Naive thymus-derived CD4-positive, alpha-beta T cell (primary cell): ENCODE measurements at regions of chr20 and their contacts with region 1.

Region 1: DNA sequence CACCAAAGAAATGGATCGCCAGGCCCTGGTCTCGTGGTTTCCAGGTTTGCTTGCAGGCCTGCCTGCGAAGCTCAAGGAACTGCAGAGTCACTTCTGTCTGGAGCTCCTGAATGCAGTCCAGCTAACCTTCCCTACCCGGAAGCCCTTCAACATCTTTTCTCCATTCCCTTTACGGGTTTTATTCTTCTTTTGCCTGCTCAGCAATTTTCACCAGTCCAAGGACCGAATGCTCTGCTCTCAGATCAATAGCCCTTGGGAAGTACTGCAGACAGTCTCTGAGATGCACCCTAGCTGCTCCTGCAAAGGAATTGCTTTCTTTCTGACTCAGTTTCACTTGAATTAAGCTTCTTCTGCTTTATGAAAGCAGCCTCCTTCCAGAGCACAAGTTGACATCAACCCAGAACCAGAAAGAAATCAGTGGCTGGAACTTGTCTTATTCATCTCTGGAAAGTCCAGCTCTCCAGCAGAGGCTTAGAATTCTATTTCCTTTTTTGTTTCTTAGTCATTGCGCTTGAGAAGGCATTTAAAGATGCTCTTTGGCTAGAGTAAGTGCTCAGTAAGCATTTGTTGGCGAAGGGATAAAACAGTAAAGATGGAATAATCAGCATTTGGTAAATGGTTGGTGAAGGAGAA is 18.7 kb upstream of the YWHAB start:
- DNase-seq: no peak
- ATAC-seq: no peak
- H3K4me3 ChIP-seq: no peak overlapping the region
- H3K4me3 Mint-ChIP-seq: peak overlapping the region in 9 of 10 donors; percentile 41 to 81 (median 70)
- H3K27ac ChIP-seq: no peak overlapping the region
- H3K27ac Mint-ChIP-seq: peak overlapping the region in 2 of 9 donors; percentile 33 to 43
- H3K4me1 ChIP-seq: no peaks in the 10 kb centered on the region
- H3K4me1 Mint-ChIP-seq: peaks cover 0 to 15% (median 8%) of the 10 kb centered on the region in 7 donors
- H3K27me3 ChIP-seq: no peaks in the 10 kb centered on the region
- H3K27me3 Mint-ChIP-seq: peaks cover 0 to 28% (median 0%) of the 10 kb centered on the region in 5 donors

Region 2: DNA sequence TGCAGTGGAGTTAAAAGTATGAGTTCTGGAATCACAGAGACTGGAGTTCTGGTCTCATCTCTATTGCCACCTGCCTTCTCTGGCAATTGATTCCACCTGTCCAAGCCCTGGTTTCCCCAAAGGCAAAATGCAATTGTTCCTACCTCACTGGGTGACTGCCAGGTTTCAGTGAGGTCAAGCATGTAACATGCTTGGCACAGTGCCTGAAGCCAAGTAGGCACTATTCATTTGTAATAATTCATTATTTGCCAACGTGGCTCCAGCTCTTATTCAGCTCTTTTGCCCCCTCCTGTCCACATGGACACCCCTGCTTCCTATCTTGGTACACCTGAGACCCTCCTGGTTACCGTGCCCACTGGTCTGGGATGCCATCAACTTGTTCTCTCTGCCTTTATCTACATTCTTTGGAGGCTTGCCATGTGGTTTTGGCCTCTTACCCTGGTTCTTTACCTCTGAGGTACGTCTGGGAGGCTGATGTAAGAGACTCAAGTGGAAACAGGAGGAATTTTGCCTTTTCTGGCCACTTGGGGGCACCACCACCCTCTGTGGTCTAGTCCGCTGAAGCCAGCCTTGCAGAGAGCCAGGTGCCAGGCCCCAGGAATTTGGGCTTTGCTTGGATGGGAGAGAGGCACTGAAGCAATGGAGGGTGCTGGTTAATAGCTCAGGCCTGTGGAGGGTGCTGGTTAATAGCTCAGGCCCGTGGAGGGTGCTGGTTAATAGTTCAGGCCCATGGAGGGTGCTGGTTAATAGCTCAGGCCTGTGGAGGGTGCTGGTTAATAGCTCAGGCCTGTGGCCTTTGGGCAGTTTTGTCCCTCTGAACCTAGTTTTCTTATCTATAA is 119.4 kb before region 1 on chr20:
- CTCF ChIA-PET with region 1: interaction called, 3 read pairs
- POLR2A ChIA-PET with region 1: no interaction called
- intact Hi-C with region 1: loop called (anchors 1 kb)
- DNase-seq: peak in 8 of 9 donors; percentile 28 to 53 (median 42)
- ATAC-seq: peak; percentile 59
- H3K4me3 ChIP-seq: no peak overlapping the region
- H3K4me3 Mint-ChIP-seq: peak overlapping the region; percentile 28 to 83 (median 69)
- H3K27ac ChIP-seq: no peak overlapping the region
- H3K27ac Mint-ChIP-seq: peak overlapping the region in 3 of 9 donors; percentile 9 to 80 (median 29)
- H3K4me1 ChIP-seq: peaks cover 0 to 6% of the 10 kb centered on the region in 2 donors
- H3K4me1 Mint-ChIP-seq: peaks cover 9 to 18% (median 16%) of the 10 kb centered on the region in 7 donors
- H3K27me3 ChIP-seq: peaks cover 0 to 4% of the 10 kb centered on the region in 2 donors
- H3K27me3 Mint-ChIP-seq: peaks cover 10 to 41% (median 31%) of the 10 kb centered on the region in 5 donors

Region 3: GRCh38 chr20:44800398-44801046 is 66.3 kb before region 1 on chr20:
- CTCF ChIA-PET with region 1: no interaction called
- POLR2A ChIA-PET with region 1: no interaction called
- intact Hi-C with region 1: loop called in 1 of 2 experiments (anchors 2 kb)
- DNase-seq: peak in 1 of 9 donors; percentile 2
- ATAC-seq: no peak
- H3K4me3 ChIP-seq: no peak overlapping the region
- H3K4me3 Mint-ChIP-seq: no peak overlapping the region
- H3K27ac ChIP-seq: no peak overlapping the region
- H3K27ac Mint-ChIP-seq: no peak overlapping the region
- H3K4me1 ChIP-seq: no peaks in the 10 kb centered on the region
- H3K4me1 Mint-ChIP-seq: no peaks in the 10 kb centered on the region
- H3K27me3 ChIP-seq: no peaks in the 10 kb centered on the region
- H3K27me3 Mint-ChIP-seq: peaks cover 10 to 32% (median 17%) of the 10 kb centered on the region in 5 donors